Aorta (tissue), 5 donors: ENCODE measurements at regions of chr1 and their contacts with region 1.

Region 1: DNA sequence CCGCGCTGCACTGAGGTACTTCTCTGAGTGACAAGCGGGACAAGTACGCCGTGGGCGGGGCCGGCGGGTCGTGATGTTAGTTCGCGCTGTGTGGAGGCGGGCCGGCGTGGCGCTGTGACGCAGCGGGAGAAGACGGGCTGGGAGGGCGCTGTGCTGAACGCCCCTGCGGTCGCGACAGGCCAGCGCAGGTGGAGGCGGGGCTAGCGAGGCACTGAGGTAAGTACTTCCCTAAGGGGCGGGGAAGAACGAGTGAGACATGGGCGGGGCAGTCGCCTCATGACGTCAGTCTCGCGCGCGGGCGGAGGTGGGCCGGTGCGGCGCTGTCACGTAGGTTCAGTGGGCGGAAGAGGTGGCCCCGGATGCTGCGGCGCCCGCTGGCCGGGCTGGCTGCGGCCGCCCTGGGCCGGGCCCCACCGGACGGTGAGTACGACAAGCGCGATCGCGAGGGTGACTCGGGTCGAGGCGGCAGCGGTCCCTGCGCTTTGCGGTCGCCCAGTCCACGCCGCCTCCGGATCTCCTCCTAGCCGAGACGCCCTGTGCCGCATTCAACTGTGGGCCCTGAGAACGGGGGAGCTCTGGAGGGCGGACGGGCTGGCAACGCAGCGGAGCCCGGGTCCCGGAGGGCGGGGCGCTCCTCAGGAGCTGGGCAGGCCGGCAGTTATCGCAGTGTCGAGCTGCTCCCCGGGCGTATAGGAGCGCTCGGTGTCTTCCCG is at the start of gene GUK1:
- DNase-seq: peak; percentile 100
- ATAC-seq: peak; percentile 97
- H3K4me3 ChIP-seq: peak within 1 kb of the TSS; percentile 50 to 91
- H3K27ac ChIP-seq: peak within 1 kb of the TSS; percentile 80 to 90
- H3K4me1 ChIP-seq: peaks cover 0 to 7% of the 10 kb centered on the region in 2 donors
- H3K27me3 ChIP-seq: no peaks in the 10 kb centered on the region
- total RNA-seq, gene GUK1: 247 to 248 TPM

Region 2: DNA sequence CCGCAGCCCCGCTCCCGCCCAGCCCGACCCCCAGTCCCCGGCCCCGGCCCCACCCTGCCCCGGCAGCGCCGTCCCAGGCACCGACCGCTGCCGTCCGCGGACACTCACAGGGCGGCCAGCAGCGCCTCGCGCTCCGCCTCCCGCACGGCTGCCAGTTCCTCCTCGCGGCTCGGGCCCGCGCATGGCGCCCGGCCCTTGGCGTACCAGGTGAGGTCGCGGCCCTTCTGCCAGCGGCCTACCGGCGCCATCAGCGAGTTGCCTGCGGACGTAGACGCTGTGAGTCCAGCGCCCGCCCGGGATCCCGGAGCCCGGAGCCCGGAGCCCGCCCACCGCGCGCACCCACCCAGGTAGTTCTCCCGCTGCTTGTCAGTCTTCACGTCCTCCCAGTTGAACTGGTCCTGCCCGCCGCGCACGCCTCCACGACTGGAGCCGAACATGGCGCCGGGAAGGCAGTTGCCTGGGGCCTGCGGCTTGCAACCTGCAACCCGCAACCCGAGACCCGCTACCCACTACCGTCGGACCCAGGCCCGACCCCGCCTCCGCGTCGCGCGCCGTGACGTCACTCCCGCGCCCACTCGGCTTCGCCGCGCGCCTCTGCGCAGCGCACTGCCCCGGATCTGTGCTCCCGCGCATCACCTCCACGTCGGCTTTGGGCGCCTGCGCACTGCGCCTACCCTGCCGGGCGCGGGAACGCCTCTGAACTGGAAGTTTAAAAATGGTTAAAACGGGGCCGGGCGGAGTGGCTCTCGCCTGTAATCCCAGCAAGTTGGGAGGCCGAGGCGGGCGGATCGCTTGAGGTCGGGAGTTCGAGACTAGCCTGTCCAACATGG is 37.1 kb before region 1 on chr1 and contains the start of gene C1orf35:
- intact Hi-C with region 1: loop called in 1 of 2 experiments (anchors 2 kb)
- DNase-seq: peak; percentile 96 to 99
- ATAC-seq: peak; percentile 92
- H3K4me3 ChIP-seq: peak within 1 kb of the TSS; percentile 58 to 77
- H3K27ac ChIP-seq: peak within 1 kb of the TSS in 1 of 2 donors; percentile 81
- H3K4me1 ChIP-seq: no peaks in the 10 kb centered on the region
- H3K27me3 ChIP-seq: no peaks in the 10 kb centered on the region
- total RNA-seq, gene C1orf35: 7.9 to 11.4 TPM

Region 3: DNA sequence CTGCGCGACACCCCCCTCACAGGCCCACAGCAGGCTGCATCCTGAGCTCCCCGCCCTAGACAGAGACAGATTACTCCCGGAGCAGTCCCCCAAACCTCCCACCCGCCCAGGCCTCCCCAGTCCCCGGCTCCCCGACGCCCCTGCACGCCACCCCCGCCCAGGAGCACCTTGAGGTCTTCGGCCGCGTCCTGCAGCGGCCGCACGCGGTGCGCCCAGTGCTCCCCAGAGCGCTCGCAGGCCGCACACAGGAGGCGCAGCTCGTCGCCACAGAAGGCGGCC is 265.8 kb after region 1 on chr1:
- intact Hi-C with region 1: loop called in 1 of 2 experiments (anchors 10 kb)
- DNase-seq: peak in 1 of 2 donors; percentile 77
- ATAC-seq: peak; percentile 4
- H3K4me3 ChIP-seq: peak overlapping the region; percentile 61 to 74
- H3K27ac ChIP-seq: no peak overlapping the region
- H3K4me1 ChIP-seq: no peaks in the 10 kb centered on the region
- H3K27me3 ChIP-seq: no peaks in the 10 kb centered on the region